ENCODE measurements at regions of chr2 and their contacts with region 1.

Region 1: DNA sequence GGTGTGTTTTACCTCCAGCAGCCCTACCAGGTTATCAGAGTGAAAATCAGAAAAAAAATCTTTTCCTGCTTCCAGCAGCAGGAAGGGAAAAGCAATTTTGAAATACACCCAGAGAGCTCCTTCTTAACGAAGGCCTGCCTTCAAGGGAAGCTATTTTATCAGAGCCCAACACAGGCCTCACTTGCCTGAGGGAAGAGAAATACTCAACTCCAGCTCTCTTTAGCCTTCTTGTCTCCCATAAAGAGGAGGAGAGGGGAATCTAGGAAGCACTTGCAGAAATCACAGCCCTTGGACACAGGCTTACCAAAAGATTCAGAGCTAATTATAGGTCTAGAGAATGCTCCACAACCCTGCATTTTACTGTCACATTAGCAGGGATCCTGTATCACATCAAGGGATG is 896.1 kb upstream of the CNTNAP5 start:
- DNase-seq: no peak
- H3K4me3 ChIP-seq: no peak overlapping the region
- H3K4me3 Mint-ChIP-seq: no peak overlapping the region
- H3K27ac ChIP-seq: no peak overlapping the region
- H3K27ac Mint-ChIP-seq: peak overlapping the region in 1 of 8 donors; percentile 34
- H3K4me1 ChIP-seq: no peaks in the 10 kb centered on the region
- H3K4me1 Mint-ChIP-seq: no peaks in the 10 kb centered on the region
- H3K27me3 ChIP-seq: no peaks in the 10 kb centered on the region
- H3K27me3 Mint-ChIP-seq: no peaks in the 10 kb centered on the region

Region 2: DNA sequence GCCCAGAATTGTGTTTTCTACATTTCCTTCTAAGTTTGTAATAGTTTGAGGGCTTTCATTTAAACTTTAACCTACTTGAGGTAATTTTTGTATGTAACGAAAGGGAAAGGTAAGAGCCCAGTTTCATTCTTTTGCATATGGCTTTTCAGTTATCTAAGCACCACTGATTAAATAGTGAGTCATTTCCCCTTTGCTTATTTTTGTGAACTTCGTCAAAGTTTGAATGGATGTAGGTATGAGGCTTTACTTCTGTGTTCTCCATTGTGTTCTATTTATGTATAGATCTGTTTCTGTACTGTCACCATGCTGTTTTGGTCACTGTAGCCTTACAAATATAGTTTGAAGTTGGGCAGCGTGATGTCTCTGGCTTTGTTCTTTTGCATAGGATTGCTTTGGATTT is 48.6 kb before region 1 on chr2:
- CTCF ChIA-PET with region 1: no interaction called
- POLR2A ChIA-PET with region 1: no interaction called
- DNase-seq: no peak
- H3K4me3 ChIP-seq: no peak overlapping the region
- H3K4me3 Mint-ChIP-seq: no peak overlapping the region
- H3K27ac ChIP-seq: no peak overlapping the region
- H3K27ac Mint-ChIP-seq: no peak overlapping the region
- H3K4me1 ChIP-seq: no peaks in the 10 kb centered on the region
- H3K4me1 Mint-ChIP-seq: no peaks in the 10 kb centered on the region
- H3K27me3 ChIP-seq: no peaks in the 10 kb centered on the region
- H3K27me3 Mint-ChIP-seq: no peaks in the 10 kb centered on the region

Region 3: DNA sequence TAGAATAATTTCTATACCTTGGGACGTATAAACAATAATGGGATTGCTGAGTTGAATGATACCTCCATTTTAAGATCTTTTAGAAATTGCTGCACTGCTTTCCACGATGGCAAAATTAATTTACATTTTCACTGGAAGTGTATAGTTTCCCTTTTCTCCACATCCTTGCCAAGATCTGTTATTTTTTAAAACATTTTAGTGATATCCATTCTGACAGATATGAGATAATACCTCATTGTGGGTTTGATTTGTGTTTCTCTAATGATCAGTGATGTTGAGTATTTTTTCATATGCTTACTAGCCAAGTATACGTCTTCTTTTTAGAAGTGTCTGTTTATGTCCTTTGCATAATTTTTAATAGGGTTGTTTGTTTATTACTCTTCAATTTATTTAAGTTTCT is 12.4 kb before region 1 on chr2:
- CTCF ChIA-PET with region 1: no interaction called
- POLR2A ChIA-PET with region 1: interaction called, 11 read pairs
- DNase-seq: no peak
- H3K4me3 ChIP-seq: no peak overlapping the region
- H3K4me3 Mint-ChIP-seq: no peak overlapping the region
- H3K27ac ChIP-seq: no peak overlapping the region
- H3K27ac Mint-ChIP-seq: no peak overlapping the region
- H3K4me1 ChIP-seq: no peaks in the 10 kb centered on the region
- H3K4me1 Mint-ChIP-seq: no peaks in the 10 kb centered on the region
- H3K27me3 ChIP-seq: no peaks in the 10 kb centered on the region
- H3K27me3 Mint-ChIP-seq: no peaks in the 10 kb centered on the region

Measured in CD8-positive, alpha-beta memory T cell (primary cell).